ENCODE measurements at regions of chr5 and their contacts with region 1.

Region 1: DNA sequence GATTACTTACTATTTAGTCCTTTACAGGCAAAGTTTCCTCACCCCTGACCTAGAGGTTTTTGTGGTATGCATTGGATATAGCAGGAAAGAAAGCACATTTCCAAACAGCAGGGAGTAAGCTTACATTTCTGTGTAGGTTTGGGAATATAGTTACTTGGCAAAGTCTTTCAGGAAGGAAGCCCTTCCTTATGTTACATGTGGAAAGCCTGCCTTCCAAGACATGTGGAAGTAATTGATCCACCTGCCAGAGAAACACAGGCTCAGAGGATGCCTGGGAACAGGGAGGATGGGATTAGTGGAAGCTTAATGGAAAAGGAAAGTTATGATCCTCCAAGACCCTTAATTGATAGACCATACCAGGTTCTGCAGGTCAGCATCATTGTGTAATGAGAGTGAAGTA is 87.3 kb upstream of the PPP1R2B start:
- DNase-seq: no peak

Region 2: GRCh38 chr5:156584528-156585270 is 178.1 kb before region 1 on chr5:
- intact Hi-C with region 1: loop called (anchors 10 kb)
- DNase-seq: no peak

Region 3: DNA sequence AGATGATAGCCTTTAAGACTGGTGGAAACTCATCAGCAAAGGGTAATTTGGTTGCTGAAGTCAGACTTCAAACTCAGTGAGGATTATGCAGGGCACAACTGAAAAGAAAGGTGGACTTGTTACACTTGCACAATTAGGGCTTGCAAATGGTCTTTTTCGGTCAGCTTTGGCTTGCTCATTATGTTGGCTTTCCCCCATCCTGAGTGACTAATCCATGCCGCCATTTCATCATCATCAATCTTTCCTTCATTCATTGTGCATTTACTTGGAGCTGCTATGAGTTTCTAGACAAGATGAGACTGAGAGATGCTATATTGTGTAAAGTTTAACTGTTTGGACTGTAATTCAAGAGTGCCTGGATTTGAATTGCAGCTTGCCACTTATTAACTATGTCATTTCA is 47.5 kb before region 1 on chr5:
- intact Hi-C with region 1: no loop called
- DNase-seq: no peak

Region 4: GRCh38 chr5:156739881-156740280 is 22.9 kb before region 1 on chr5:
- intact Hi-C with region 1: no loop called
- DNase-seq: no peak